ENCODE measurements at regions of chr6 and their contacts with region 1.

Region 1: DNA sequence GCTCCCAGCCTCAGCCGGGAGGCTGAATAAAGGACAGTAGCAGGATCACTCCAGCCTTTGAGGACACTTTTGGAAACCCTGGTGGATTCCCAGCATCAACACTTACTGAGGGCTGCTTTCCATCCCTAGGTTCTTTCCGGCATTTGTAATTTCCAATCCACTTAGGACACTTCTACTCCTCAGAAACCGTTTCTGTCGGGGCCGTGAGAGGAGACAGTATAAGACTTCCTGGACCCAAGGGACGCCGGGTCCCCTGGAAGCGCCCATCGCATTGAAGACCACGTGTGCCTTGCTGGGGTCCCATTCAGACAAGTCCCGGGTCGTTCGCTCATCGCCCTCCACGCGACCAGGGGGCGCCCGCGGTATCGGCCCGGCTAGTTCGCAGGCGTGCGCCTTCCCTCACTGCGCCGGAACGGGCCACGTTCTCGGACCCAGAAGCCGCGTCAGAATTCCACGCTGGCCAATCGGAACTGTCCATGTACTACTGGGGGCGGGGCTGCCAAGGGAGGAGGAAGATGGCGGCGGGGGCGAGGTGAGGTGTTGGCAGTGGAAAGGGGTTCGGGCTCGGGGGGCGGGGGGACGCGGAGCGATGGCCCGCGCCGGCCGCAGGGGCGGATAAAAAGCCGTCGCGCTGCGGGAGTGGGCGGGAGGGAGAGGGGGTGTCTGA is at the start of gene NUS1:
- DNase-seq: peak; percentile 94 to 98 (median 95)
- ATAC-seq: peak; percentile 93
- H3K4me3 ChIP-seq: peak within 1 kb of the TSS; percentile 89
- H3K27ac ChIP-seq: peak within 1 kb of the TSS; percentile 91
- H3K4me1 ChIP-seq: peaks cover 8 to 33% of the 10 kb centered on the region in 2 experiments
- H3K27me3 ChIP-seq: no peaks in the 10 kb centered on the region
- CTCF ChIP-seq: peak; percentile 84 to 85 (median 85)
- EP300 ChIP-seq: no peak
- POLR2A ChIP-seq: peak; percentile 81
- RAD21 ChIP-seq: 0 out of 4 replicates have a peak, but pooled peaks of 1 of the 2 experiments have one; percentile 16
- polyA plus RNA-seq, gene NUS1: 21.7 to 22.9 TPM

Region 2: GRCh38 chr6:117653949-117654348 is 21.2 kb before region 1 on chr6:
- CTCF ChIA-PET with region 1: no interaction called
- POLR2A ChIA-PET with region 1: no interaction called
- in situ Hi-C with region 1: no loop called
- intact Hi-C with region 1: loop called (anchors 1 kb)
- DNase-seq: peak in 2 of 4 experiments; percentile 59 to 77
- ATAC-seq: peak; percentile 93
- H3K4me3 ChIP-seq: no peak overlapping the region
- H3K27ac ChIP-seq: peak overlapping the region; percentile 54
- H3K4me1 ChIP-seq: peaks cover 0 to 9% of the 10 kb centered on the region in 2 experiments; a peak in 2 of 5 replicates
- H3K27me3 ChIP-seq: no peaks in the 10 kb centered on the region
- CTCF ChIP-seq: no peak
- EP300 ChIP-seq: peak; percentile 72; the same call in 1 of the 2 replicates
- POLR2A ChIP-seq: no peak
- RAD21 ChIP-seq: no peak